CD4-positive, alpha-beta T cell (primary cell): ENCODE measurements at regions of chr3 and their contacts with region 1.

Region 1: GRCh38 chr3:49912881-49913281 is 9.2 kb upstream of the MST1R start:
- DNase-seq: no peak
- ATAC-seq: no peak
- H3K4me3 ChIP-seq: no peak overlapping the region
- H3K4me3 Mint-ChIP-seq: no peak overlapping the region
- H3K27ac ChIP-seq: no peak overlapping the region
- H3K27ac Mint-ChIP-seq: no peak overlapping the region
- H3K4me1 ChIP-seq: no peaks in the 10 kb centered on the region
- H3K4me1 Mint-ChIP-seq: no peaks in the 10 kb centered on the region
- H3K27me3 ChIP-seq: no peaks in the 10 kb centered on the region
- H3K27me3 Mint-ChIP-seq: no peaks in the 10 kb centered on the region
- CTCF ChIP-seq: no peak

Region 2: DNA sequence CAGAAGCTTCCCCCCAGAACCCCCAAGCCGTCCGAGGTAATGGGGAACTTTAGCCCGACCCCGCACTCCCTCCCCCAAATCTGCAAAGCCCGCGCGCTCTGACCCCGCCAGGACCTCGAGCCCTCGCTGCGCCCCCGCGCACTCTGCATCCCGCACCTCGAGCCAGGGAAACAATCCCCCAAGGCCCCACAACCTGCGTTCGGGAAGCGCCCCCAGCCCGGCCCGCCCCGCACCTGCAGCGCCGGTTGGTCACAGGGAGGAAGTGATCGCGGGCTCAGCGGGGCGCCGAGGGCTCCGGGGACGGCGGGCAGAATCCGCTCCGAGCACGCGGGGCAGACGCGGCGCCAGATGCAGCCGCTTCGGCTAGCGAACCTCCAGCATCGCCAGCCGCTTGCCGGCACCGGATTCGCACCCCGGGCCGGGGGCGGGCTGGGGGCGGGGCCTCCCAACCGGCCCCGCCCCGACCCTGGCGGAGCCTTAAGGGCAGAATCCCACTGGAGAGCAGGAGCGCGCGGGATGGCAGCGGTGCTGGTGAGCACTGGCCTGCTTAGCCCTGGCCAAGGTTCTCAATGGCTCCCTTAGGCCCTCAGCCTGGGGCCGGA is 43.3 kb before region 1 on chr3 and contains the start of gene CAMKV:
- CTCF ChIA-PET with region 1: no interaction called
- POLR2A ChIA-PET with region 1: no interaction called
- intact Hi-C with region 1: loop called in 1 of 2 experiments (anchors 5 kb)
- DNase-seq: peak in 11 of 14 experiments; percentile 4 to 54 (median 24)
- ATAC-seq: peak; percentile 54
- H3K4me3 ChIP-seq: peak within 1 kb of the TSS; percentile 43
- H3K4me3 Mint-ChIP-seq: peak within 1 kb of the TSS; percentile 30
- H3K27ac ChIP-seq: no peak within 1 kb of the TSS
- H3K27ac Mint-ChIP-seq: no peak within 1 kb of the TSS
- H3K4me1 ChIP-seq: peaks cover 25% of the 10 kb centered on the region
- H3K4me1 Mint-ChIP-seq: no peaks in the 10 kb centered on the region
- H3K27me3 ChIP-seq: peaks cover 38 to 40% of the 10 kb centered on the region in 2 experiments
- H3K27me3 Mint-ChIP-seq: peaks cover 49% of the 10 kb centered on the region
- CTCF ChIP-seq: no peak
- total RNA-seq, gene CAMKV: 0.28 TPM in 1 of 2 experiments, not detected in the other